ENCODE measurements at regions of chr7 and their contacts with region 1.

Region 1: GRCh38 chr7:1086588-1087464 is 1.1 kb upstream of the GPER1 start:
- DNase-seq: peak; percentile 87

Region 2: DNA sequence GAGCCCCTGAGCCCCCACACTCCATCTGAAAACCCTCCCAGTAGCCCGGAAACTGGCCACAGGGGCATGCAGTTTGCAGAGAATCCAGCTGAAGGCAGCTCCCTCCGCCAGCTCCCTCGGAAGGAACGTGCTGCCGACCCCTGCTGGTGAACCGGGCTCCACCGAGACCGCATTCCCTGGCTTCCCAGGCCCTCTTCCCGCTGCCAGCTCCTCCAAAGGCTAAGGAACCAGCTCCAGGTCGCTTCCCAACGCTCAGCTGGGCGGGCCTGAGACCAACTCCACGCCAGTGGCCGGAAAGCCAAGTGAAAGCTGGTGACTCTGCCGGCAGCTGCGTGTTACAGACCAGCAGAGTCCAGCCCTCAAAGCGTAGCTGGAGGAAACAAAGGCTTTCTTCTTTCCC is 36.9 kb after region 1 on chr7:
- intact Hi-C with region 1: loop called (anchors 5 kb)
- DNase-seq: peak; percentile 88

Region 3: GRCh38 chr7:1137510-1138167 is 50.8 kb after region 1 on chr7:
- intact Hi-C with region 1: loop called (anchors 5 kb)
- DNase-seq: no peak

Measured in cardiac septum (tissue), 1 donor.